Astrocyte of the spinal cord (primary cell): ENCODE measurements at regions of chr1 and their contacts with region 1.

Region 1: GRCh38 chr1:159780583-159781582 is at the start of gene DUSP23:
- DNase-seq: peak; percentile 99
- H3K4me3 ChIP-seq: peak within 1 kb of the TSS; percentile 59
- CTCF ChIP-seq: peak; percentile 92

Region 2: GRCh38 chr1:159561497-159561896 is 219.4 kb before region 1 on chr1:
- in situ Hi-C with region 1: no loop called
- DNase-seq: no peak
- H3K4me3 ChIP-seq: no peak overlapping the region
- CTCF ChIP-seq: no peak

Region 3: DNA sequence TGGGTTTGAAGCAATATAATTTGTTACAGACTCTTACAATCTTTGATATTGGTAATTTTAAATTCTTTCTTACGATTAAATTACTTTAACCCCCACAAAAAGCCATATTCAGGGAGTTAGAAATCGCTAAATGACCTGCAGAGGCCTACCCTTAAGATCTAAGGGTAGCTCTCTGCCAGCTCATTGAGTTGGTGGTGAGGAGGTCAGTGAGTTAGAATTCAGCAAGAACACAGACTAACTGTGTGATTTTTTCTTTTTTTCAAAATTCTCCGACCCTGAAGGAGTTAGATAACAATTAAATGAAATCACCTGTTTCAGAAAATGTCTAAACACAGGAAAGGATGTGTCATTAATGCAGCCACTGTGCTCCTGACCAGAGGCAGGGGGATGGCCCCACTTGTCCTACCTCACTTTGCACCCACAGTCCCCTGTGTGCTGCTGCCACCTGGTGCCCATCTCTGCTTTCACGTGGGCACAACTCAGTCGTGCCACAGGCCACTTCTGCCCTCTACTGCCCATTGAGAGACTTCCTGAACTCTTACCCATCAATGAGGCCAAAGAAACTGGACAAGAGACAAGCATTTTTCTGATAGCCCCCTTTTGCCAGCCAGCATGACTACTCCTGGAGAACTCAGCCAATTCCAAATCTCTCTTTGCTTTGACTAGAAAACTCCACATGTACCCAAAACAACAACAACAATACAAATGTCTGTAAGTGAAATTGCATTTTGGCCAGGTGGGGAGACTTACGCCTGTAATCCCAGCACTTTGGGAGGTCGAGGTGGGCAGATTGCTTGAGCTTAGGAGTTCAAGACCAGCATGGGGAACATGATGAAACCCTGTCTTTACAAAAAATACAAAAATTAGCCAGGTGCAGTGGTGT is 110.6 kb after region 1 on chr1:
- in situ Hi-C with region 1: loop called (anchors 25 kb)
- DNase-seq: peak; percentile 92
- H3K4me3 ChIP-seq: no peak overlapping the region
- CTCF ChIP-seq: peak; percentile 98